Psoas muscle (tissue), 8 donors: ENCODE measurements at regions of chr19 and their contacts with region 1.

Region 1: GRCh38 chr19:18203863-18204393 is at the start of gene RAB3A:
- DNase-seq: peak; percentile 100
- ATAC-seq: peak; percentile 90 to 95 (median 93)
- H3K4me3 ChIP-seq: peak within 1 kb of the TSS; percentile 77
- H3K27ac ChIP-seq: peak within 1 kb of the TSS; percentile 98
- H3K4me1 ChIP-seq: peaks cover 22% of the 10 kb centered on the region
- H3K27me3 ChIP-seq: no peaks in the 10 kb centered on the region
- CTCF ChIP-seq: no peak
- total RNA-seq, gene RAB3A: 0.86 to 3.6 (median 1.5) TPM

Region 2: GRCh38 chr19:18179957-18180356 is 24.0 kb before region 1 on chr19:
- intact Hi-C with region 1: no loop called
- DNase-seq: no peak
- ATAC-seq: no peak
- H3K4me3 ChIP-seq: no peak overlapping the region
- H3K27ac ChIP-seq: no peak overlapping the region
- H3K4me1 ChIP-seq: no peaks in the 10 kb centered on the region
- H3K27me3 ChIP-seq: peaks cover 0 to 2% (median 0%) of the 10 kb centered on the region in 3 donors
- CTCF ChIP-seq: no peak

Region 3: GRCh38 chr19:18251587-18252369 is 47.9 kb after region 1 on chr19:
- intact Hi-C with region 1: loop called (anchors 1 kb)
- DNase-seq: peak; percentile 74 to 81
- ATAC-seq: peak; percentile 79 to 92 (median 88)
- H3K4me3 ChIP-seq: no peak overlapping the region
- H3K27ac ChIP-seq: no peak overlapping the region
- H3K4me1 ChIP-seq: no peaks in the 10 kb centered on the region
- H3K27me3 ChIP-seq: no peaks in the 10 kb centered on the region
- CTCF ChIP-seq: peak; percentile 97

Region 4: DNA sequence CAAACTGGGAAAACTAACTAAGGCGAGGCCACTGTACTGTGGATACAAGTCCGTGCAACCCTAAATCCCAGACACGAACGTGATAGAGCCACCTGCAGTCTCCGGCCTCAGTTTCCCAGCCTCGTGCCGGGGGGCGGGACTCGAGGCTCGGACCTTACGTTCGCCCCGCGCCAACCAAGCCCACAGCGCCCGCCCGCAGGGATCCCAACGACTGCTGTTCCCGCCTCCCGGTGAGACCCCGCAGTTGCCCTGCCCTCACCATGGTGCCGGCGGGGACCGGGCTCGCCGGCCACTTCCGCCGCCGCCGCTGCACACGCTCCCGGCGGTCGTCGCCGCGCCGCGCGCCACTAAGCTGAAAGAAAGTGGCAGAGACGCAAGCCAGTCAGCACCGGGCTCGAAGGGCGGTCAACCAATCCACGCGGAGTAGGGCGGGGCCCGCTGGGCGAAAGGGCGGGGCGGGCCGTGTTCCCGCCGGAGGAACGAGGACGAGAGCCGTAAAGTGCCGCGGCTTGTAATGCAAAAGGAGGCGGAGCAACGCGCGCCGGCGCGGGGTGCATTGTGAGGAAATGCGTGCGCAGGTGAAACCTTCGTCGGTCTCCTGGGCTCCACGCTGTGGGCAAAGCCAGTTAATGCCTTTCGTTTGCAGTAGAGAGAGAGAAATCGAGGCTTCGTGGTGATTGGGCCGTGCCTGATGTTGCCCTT is 119.0 kb after region 1 on chr19 and contains the start of gene LSM4:
- intact Hi-C with region 1: loop called in 1 of 2 experiments (anchors 2 kb)
- DNase-seq: peak; percentile 99
- ATAC-seq: peak; percentile 93 to 97 (median 96)
- H3K4me3 ChIP-seq: peak within 1 kb of the TSS; percentile 85
- H3K27ac ChIP-seq: peak within 1 kb of the TSS; percentile 89
- H3K4me1 ChIP-seq: peaks cover 38% of the 10 kb centered on the region
- H3K27me3 ChIP-seq: no peaks in the 10 kb centered on the region
- CTCF ChIP-seq: peak; percentile 25
- total RNA-seq, gene LSM4: 87.9 to 136 (median 112) TPM

Region 5: DNA sequence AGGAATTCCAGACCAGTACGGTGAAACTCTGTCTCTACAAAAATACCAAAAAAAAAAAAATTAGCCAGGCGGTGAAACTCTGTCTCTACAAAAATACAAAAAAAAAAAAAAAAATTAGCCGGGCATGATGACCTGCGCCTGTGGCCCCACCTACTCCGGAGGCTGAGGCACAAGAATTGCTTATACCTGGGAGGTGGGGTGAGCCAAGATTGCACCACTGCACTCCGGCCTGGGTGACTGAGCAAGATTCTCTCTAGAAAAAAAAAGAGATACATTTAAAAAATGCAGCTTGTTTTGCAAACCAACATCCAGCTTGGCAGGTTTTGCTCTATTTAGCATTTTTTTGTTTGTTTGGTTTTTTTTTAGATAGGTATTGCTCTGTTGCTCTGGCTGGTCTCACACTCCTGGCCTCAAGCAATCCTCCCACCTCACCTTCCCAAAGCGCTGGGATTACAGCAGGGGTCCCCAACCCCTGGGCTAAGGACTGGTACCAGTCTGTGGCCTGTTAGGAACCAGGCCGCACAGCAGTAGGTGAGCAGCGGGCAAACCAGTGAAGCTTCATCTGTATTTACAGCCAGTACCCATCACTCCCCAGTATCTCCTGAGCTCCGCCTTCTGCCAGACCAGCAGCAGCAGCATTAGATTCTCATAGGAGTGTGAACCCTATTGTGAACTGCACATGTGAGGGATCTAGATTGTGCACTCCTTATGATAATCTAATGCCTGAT is 129.9 kb after region 1 on chr19:
- intact Hi-C with region 1: loop called in 1 of 2 experiments (anchors 5 kb)
- DNase-seq: no peak
- ATAC-seq: no peak
- H3K4me3 ChIP-seq: no peak overlapping the region
- H3K27ac ChIP-seq: no peak overlapping the region
- H3K4me1 ChIP-seq: peaks cover 15% of the 10 kb centered on the region
- H3K27me3 ChIP-seq: no peaks in the 10 kb centered on the region
- CTCF ChIP-seq: no peak